PC-3 (cell line): ENCODE measurements at regions of chr2 and their contacts with region 1.

Region 1: DNA sequence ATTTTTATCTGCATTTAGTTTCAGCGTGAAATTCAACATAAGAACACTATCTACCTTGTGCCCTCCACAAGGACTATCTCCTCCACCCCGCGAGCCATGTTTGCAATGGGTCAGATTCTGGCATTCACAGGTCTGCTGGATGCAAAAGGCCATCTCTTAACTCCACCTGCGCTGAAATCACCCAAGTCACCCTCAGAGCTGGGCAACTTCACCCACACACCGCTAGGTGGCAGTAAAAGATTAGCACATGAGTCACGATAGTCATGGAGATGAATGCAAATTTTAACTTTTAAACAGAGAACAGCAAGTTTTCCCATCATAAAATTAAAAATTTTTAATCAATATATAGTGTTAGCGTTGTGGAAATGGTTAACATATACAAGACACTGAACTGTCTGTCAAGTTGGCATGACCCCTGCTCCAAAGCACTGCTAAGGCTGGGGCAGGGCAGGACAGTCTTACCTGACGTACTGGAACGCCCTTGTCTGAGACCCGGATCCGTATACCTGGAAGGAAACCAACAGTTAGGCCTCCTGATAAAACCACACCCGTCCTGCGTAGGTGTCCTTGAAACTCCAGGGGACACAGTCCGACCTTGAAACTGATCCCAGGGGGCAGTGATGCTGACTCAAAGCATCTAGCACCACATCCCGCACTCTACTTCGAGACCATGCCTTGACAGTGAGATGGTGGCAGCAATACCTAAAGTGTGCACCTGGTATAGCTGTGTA is 89.6 kb downstream of the UXS1 start:
- DNase-seq: peak; percentile 86
- ATAC-seq: peak; percentile 66
- H3K4me3 ChIP-seq: no peak overlapping the region
- H3K27ac ChIP-seq: no peak overlapping the region
- H3K4me1 ChIP-seq: peaks cover 11% of the 10 kb centered on the region
- H3K27me3 ChIP-seq: no peaks in the 10 kb centered on the region
- CTCF ChIP-seq: peak; percentile 94

Region 2: DNA sequence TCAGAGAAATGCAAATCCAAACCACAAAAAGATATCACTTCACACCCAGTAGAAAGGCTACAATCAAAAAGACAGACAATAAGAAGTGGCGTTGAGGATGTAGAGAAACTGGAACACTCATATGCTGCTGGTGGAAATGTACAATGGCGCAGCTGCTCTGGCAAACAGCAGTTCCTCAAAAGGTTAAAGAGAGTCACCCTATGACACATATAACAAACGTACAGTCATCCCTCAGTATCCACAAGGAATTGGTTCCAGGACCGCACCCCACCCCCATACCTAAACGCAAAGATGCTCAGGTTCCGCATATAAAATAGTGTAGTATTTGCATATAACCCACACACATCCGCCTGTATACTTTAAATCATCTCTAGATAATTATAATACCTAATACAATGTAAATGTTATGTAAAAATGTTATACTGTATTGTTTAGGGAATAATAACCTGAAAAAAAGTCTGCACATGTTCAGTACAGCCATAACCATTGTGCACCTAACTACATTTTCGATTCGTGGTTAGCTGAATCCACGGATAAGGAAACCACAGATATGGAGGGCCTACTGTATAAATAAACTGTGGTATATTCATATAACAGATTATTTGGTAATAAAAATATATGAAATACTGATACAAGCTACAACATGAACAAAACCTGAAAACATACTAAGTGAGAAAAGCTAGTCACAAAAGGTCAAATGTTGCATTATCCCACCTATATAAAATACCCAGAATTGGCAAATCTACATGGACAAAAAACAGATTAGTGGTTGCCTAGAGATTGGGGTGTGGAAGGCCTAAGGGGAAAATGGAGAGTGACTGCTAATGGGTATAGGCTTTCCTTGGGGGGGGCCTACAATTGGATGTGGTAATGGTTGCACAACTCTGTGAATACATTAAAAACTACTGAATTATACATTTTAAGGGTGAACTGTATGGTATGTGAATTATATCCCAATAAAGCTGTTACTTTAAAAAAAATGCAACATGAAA is 52.1 kb after region 1 on chr2:
- CTCF ChIA-PET with region 1: no interaction called
- POLR2A ChIA-PET with region 1: no interaction called
- intact Hi-C with region 1: loop called (anchors 1 kb)
- DNase-seq: peak; percentile 93
- ATAC-seq: peak; percentile 90
- H3K4me3 ChIP-seq: peak overlapping the region; percentile 21; the same call in 1 of the 2 replicates
- H3K27ac ChIP-seq: peak overlapping the region; percentile 88
- H3K4me1 ChIP-seq: peaks cover 37% of the 10 kb centered on the region
- H3K27me3 ChIP-seq: no peaks in the 10 kb centered on the region
- CTCF ChIP-seq: no peak

Region 3: GRCh38 chr2:106193977-106194778 is 89.7 kb after region 1 on chr2 and contains the start of gene UXS1:
- CTCF ChIA-PET with region 1: interaction called, 4 read pairs
- POLR2A ChIA-PET with region 1: no interaction called
- intact Hi-C with region 1: loop called (anchors 2 kb)
- DNase-seq: peak; percentile 97
- ATAC-seq: peak; percentile 64
- H3K4me3 ChIP-seq: peak within 1 kb of the TSS; percentile 81
- H3K27ac ChIP-seq: 0 out of 2 replicates have a peak within 1 kb of the TSS, but pooled peaks have one; percentile 2
- H3K4me1 ChIP-seq: peaks cover 37% of the 10 kb centered on the region
- H3K27me3 ChIP-seq: no peaks in the 10 kb centered on the region
- CTCF ChIP-seq: no peak
- total RNA-seq, gene UXS1: 45.8 and 49.1 TPM in 2 replicates

Region 4: GRCh38 chr2:106269591-106270291 is 165.2 kb after region 1 on chr2:
- CTCF ChIA-PET with region 1: no interaction called
- POLR2A ChIA-PET with region 1: no interaction called
- intact Hi-C with region 1: loop called (anchors 10 kb)
- DNase-seq: peak; percentile 73
- ATAC-seq: peak; percentile 95
- H3K4me3 ChIP-seq: peak overlapping the region; percentile 77
- H3K27ac ChIP-seq: no peak overlapping the region
- H3K4me1 ChIP-seq: peaks cover 9% of the 10 kb centered on the region; the same call in 1 of the 2 replicates
- H3K27me3 ChIP-seq: no peaks in the 10 kb centered on the region
- CTCF ChIP-seq: no peak

Region 5: DNA sequence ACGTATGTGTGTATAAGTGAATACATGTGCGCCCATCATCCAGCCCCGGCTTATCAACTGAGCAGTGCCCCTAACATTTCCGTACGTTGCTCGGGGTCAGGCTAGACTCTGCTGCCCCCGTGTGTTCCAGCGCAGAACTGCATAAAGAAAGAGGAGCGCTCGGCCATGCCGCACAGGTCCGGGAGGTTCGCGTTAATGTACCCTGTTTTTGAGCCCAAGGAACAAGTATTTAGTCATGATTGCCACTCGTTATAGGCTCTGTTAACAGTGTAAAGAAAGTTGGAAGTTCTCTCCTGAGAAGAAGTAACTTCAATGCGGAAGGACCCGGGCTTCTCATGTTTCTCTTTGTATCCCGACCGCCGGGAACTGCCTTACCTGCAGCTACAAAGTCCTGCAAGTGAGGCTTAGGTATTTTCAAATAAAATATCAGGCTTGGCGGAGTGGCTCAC is 438.3 kb after region 1 on chr2:
- CTCF ChIA-PET with region 1: interaction called, 3 read pairs
- POLR2A ChIA-PET with region 1: no interaction called
- intact Hi-C with region 1: loop called (anchors 1 kb)
- DNase-seq: peak; percentile 83
- ATAC-seq: peak; percentile 89
- H3K4me3 ChIP-seq: peak overlapping the region; percentile 70
- H3K27ac ChIP-seq: no peak overlapping the region
- H3K4me1 ChIP-seq: no peaks in the 10 kb centered on the region
- H3K27me3 ChIP-seq: peaks cover 59% of the 10 kb centered on the region
- CTCF ChIP-seq: peak; percentile 83

Region 6: GRCh38 chr2:106582148-106583143 is 477.9 kb after region 1 on chr2:
- CTCF ChIA-PET with region 1: interaction called, 3 read pairs
- POLR2A ChIA-PET with region 1: no interaction called
- intact Hi-C with region 1: loop called (anchors 5 kb)
- DNase-seq: peak; percentile 84
- ATAC-seq: peak; percentile 93
- H3K4me3 ChIP-seq: peak overlapping the region; percentile 35; the same call in 1 of the 2 replicates
- H3K27ac ChIP-seq: no peak overlapping the region
- H3K4me1 ChIP-seq: no peaks in the 10 kb centered on the region
- H3K27me3 ChIP-seq: peaks cover 46% of the 10 kb centered on the region
- CTCF ChIP-seq: peak; percentile 83